ENCODE measurements at regions of chr9 and their contacts with region 1.

Region 1: DNA sequence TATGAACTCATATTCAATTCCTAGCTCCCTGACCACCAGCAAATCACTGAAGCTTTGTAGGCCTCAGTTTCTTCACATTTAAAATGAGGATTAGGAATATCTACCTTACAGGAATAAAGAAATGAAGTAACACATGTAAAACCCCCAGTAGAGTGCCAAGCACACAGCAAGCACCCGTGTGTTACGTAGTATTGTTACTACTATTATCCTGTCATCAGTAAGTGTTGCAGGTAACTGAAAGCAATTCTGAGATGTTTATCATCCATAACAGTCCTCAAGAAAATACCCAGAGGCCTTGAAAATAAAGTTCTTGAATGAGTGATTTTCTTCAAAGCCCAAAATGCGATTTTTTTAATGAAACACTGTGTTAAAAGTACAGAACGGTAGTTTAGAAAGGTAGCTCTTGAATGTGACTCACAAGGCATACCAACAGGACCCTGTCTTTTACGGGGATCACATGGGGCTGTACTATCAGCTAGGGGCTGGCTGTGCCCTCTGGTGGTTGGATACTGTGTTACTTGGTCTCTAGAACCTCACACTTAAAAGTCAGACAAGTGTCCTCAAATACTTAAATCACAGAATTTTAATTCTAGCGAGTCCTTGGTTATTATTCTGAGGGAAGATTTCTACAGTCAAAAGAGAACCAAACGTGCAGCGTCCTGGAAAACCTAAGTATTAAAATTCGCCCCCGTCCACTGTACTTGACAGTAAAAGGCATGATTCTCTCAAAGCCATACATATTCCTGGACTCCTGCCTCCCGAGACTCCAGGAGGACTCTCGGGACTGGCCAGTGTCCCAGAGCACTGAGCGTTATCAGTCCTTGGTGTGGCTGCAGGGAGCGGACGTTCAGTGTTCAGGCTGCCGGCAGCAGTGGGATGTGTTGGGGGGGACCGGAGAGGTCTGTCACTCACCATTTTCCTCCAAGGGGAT is 725 bp downstream of the NDUFB6 start:
- DNase-seq: peak; percentile 65
- H3K4me3 Mint-ChIP-seq: peak overlapping the region; percentile 99
- H3K27ac Mint-ChIP-seq: peak overlapping the region; percentile 98
- H3K4me1 Mint-ChIP-seq: peaks cover 21% of the 10 kb centered on the region
- H3K27me3 Mint-ChIP-seq: peaks cover 11% of the 10 kb centered on the region

Region 2: DNA sequence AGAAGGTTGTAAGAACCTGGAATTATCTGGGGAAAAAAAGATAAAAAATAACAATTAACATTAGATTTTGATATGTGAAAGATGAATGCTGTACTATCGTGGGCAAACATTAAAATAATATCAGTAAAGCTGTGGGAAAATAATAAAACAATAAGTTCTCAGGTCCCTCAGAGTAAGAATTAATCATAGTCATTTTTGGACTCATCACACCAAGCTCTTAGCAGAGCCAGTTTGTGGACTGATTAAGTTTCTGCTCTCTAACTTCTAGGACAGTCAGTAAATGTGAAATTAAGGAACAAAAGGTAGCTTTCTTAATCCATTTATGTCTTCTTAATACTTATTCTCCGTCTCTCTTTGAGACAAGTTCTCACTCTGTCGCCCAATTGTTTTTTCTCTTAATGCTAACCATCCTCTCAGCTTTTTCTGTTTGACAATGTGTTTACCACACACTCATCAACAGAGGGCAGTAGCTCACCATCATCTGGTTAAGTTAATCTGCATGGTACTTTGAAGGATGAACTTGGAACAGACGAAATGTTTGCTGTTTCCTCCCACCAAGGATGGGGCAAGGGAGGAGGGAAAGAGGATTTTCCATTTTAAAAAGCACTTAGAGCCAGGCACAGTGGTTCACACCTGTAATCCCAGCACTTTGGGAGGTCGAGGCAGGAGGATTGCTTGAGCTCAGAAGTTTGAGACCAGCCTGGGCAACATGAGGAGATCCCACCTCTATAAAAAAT is 193.1 kb before region 1 on chr9:
- intact Hi-C with region 1: loop called (anchors 1 kb)
- DNase-seq: peak; percentile 42
- H3K4me3 Mint-ChIP-seq: peak overlapping the region; percentile 16
- H3K27ac Mint-ChIP-seq: no peak overlapping the region
- H3K4me1 Mint-ChIP-seq: peaks cover 7% of the 10 kb centered on the region
- H3K27me3 Mint-ChIP-seq: peaks cover 21% of the 10 kb centered on the region

Region 3: GRCh38 chr9:32384364-32385151 is 187.7 kb before region 1 on chr9 and contains the start of gene ACO1:
- intact Hi-C with region 1: loop called (anchors 1 kb)
- DNase-seq: peak; percentile 84
- H3K4me3 Mint-ChIP-seq: peak within 1 kb of the TSS; percentile 81
- H3K27ac Mint-ChIP-seq: peak within 1 kb of the TSS; percentile 38
- H3K4me1 Mint-ChIP-seq: peaks cover 15% of the 10 kb centered on the region
- H3K27me3 Mint-ChIP-seq: peaks cover 21% of the 10 kb centered on the region
- total RNA-seq, gene ACO1: 5.6 and 6.9 TPM in 2 replicates

Region 4: DNA sequence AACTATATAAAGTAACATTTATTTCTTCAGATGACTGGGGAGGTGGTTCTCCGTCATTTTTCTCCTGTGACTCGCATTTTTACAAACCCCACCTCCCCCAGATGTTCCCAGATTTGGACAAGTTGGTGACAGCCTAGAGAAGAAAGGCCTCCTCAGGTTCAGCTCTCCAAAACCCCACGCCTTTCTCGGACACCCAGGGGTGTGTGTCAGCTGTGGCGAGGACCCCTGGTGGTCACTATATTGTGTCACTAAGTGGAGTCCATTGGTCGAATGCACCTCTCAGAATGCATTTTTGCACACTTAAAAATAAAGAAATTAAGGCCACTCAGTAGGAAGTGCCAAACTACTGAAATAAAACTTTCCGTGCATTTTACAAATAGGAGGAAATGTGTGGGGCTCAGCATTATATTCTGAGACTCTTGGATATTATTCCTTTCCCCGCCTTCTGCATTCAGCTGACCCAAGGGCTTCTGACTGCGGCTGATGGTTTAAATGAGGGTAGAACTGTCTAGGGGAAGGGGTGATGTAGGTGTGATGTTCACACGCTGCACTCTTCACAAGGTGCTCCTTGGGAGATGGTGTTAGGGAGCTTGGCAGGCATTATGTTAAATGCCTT is 140.2 kb before region 1 on chr9:
- intact Hi-C with region 1: loop called (anchors 1 kb)
- DNase-seq: no peak
- H3K4me3 Mint-ChIP-seq: no peak overlapping the region
- H3K27ac Mint-ChIP-seq: no peak overlapping the region
- H3K4me1 Mint-ChIP-seq: peaks cover 6% of the 10 kb centered on the region
- H3K27me3 Mint-ChIP-seq: no peaks in the 10 kb centered on the region

Region 5: DNA sequence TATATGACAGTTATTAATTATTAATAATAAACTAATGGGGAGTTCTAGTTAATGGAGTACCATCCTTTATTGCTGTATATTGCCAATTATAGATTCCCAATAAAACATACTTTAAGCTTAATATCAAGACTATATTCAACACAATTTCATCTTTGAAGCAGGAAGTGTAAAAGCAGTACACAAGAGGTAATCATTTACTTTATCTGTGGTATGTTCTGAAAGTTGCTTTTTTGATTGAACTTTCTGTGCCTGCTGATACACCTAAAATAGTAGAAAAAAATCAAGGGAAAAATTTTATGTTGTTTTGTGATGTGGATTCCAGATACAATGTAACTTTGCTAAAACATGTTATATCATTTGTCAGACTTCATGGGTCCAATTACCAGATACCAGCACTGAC is 129.8 kb before region 1 on chr9:
- intact Hi-C with region 1: no loop called
- DNase-seq: no peak
- H3K4me3 Mint-ChIP-seq: no peak overlapping the region
- H3K27ac Mint-ChIP-seq: no peak overlapping the region
- H3K4me1 Mint-ChIP-seq: peaks cover 4% of the 10 kb centered on the region
- H3K27me3 Mint-ChIP-seq: no peaks in the 10 kb centered on the region

Region 6: DNA sequence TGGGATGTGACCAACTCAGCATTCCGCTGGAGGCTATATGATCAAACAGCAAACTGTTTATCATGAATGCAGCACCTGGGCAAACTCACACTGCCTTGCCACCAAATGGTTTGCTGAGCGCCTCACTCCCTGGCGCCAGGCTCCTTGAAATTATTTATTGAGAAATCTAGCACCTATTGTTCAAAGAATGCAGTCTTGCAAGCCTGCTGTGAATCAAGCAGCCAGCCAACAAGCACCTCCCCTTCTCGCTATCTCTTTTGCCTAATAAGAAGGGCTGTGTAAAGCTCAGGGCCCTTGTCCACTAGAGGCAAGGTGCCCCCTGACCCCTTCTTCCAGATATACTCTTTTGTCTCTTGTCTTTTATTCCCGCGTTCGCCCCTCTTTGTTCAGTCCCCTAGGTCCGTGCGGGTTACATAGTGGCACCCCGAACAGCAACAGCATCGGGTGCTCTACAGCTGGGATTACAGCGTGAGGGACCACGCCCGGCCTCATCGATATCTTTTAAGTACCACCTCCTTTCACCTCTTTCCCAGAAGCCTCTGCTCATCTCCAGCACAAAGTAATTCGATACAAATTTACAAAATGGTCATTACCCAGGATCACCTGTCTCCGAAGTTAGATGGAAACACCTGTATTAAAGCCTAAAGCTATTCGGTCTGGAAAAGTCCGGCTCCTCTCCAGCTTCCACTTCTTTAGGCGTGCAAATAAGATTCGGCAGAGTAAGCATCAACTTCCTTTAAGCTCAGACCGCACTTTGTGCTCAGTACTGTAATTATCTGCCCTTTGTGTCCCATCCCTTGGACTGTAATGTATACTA is 47.1 kb before region 1 on chr9:
- intact Hi-C with region 1: loop called (anchors 1 kb)
- DNase-seq: no peak
- H3K4me3 Mint-ChIP-seq: peak overlapping the region; percentile 92
- H3K27ac Mint-ChIP-seq: peak overlapping the region; percentile 86
- H3K4me1 Mint-ChIP-seq: peaks cover 53% of the 10 kb centered on the region
- H3K27me3 Mint-ChIP-seq: no peaks in the 10 kb centered on the region

Region 7: DNA sequence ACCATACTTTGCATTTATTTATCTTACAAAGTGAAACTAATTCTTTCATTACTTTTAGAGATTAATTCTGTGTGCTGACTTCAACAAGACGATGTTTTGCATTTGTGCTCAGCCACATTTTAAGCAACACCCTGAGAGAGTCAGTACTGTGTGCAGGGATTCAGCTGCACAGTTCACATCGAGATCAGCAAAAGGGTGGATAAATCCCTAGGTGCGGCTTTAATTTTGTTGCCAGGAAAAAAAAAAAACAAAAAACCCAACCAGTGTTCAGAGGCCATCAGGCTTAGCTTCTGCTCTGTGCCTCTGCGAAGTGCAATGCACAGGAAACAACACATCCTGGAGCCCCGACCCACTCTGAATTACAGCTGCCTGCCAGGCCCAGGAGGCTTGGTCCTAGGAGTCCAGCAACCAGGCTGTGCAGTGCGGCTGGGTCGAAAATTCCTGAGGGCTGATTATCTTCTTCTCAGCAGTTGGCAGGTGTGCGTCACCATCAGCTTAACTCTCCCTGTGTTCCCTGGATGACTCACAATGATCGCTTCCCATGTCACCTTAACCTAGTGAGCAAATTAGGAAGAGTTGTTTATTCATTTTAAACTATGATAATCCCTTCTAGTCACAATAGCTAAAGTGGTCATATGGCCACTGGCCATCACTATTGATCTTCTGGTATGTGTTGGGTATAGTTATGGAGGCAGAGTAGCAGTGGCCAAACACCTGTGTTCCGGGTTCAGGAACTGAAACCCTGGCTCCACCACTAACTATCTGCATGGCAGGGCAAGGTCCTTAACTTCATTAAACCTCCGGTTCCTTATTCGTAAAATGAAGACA is 31.9 kb after region 1 on chr9:
- intact Hi-C with region 1: no loop called
- DNase-seq: no peak
- H3K4me3 Mint-ChIP-seq: no peak overlapping the region
- H3K27ac Mint-ChIP-seq: no peak overlapping the region
- H3K4me1 Mint-ChIP-seq: peaks cover 8% of the 10 kb centered on the region
- H3K27me3 Mint-ChIP-seq: peaks cover 12% of the 10 kb centered on the region

Region 8: DNA sequence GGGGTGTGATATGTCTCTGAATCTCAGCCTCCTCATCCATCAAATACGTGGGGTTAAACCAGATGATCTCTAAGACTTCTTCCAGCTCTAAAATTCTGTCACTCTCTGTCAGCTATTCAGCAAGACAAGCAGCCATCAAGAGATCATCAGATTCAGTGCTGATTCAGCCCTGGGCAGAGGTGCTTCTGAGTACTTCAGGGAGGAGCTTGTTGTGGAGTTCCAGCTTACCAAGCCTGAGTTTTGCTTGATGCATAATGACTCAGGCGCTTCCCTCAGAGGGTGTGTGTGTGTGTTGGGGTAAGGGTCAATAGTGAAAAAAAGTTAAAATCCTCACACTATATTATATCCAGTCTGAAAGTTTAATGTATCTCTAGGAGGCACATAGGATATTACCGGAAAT is 92.9 kb after region 1 on chr9:
- intact Hi-C with region 1: no loop called
- DNase-seq: no peak
- H3K4me3 Mint-ChIP-seq: no peak overlapping the region
- H3K27ac Mint-ChIP-seq: no peak overlapping the region
- H3K4me1 Mint-ChIP-seq: no peaks in the 10 kb centered on the region
- H3K27me3 Mint-ChIP-seq: peaks cover 3% of the 10 kb centered on the region

Region 9: DNA sequence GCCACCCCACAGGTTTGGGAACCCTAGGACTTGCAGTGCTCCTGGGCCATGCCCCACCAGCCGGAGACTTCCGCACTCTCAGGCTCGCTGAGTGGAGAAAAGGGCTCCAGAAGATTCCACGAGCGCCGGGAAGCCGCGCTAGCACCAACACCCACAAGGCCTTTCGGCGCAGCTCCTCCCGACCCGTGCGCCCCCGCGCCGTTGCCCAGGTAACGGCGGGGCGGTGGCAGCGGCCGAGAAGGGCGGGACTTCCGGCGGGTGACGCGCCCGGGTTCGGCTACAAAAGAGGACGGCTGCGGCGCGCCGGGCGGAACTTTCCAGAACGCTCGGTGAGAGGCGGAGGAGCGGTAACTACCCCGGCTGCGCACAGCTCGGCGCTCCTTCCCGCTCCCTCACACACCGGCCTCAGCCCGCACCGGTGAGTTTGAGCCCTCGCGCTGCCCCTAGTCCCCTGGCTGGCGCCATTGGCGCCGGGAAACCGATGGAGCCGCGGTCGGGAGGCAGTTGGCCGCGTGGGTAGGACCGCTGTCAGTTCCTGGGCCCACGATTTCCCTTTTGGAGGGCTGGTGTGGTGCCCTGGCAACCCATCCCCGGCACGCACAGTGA is 452.8 kb after region 1 on chr9 and contains the start of gene DNAJA1:
- intact Hi-C with region 1: loop called (anchors 1 kb)
- DNase-seq: peak; percentile 95
- H3K4me3 Mint-ChIP-seq: peak within 1 kb of the TSS; percentile 94
- H3K27ac Mint-ChIP-seq: peak within 1 kb of the TSS; percentile 98
- H3K4me1 Mint-ChIP-seq: peaks cover 68% of the 10 kb centered on the region
- H3K27me3 Mint-ChIP-seq: no peaks in the 10 kb centered on the region
- total RNA-seq, gene DNAJA1: 296 and 312 TPM in 2 replicates

Region 10: DNA sequence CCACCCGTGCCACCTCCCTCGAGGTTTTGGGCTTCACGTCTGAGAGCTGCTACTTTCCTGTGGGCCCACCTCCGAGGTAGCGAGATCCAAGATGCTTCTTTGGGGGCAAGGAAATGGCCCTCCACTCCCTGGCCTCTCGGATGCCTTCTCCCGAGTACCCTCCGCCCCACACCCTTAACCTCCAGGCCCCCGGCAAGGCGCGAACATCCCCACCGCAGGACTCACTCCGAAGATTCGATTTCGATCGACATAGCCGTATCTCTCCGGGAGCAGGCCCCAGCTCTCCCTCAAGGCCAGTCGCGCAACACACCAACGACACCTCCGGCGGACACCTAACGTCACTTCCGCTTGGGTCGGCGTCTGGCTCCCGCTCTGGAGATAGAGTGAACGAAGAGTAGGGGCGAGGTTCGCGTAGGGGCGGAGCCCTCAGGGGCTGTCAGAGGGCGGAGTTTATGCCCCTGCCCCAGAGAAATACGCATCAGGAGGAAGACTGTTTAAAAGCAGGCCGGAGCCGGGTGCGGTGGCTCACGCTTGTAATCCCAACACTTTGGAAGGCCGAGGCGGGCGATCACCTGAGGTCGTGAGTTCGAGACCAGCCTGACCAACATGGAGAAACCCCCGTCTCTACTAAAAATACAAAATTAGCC is 504.2 kb after region 1 on chr9 and contains the start of gene SMU1:
- intact Hi-C with region 1: loop called (anchors 5 kb)
- DNase-seq: peak; percentile 96
- H3K4me3 Mint-ChIP-seq: peak within 1 kb of the TSS; percentile 99
- H3K27ac Mint-ChIP-seq: peak within 1 kb of the TSS; percentile 96
- H3K4me1 Mint-ChIP-seq: peaks cover 37% of the 10 kb centered on the region
- H3K27me3 Mint-ChIP-seq: peaks cover 2% of the 10 kb centered on the region
- total RNA-seq, gene SMU1: 28.8 TPM in 2 replicates

Region 11: GRCh38 chr9:33430942-33431341 is 858.7 kb after region 1 on chr9:
- intact Hi-C with region 1: no loop called
- DNase-seq: no peak
- H3K4me3 Mint-ChIP-seq: no peak overlapping the region
- H3K27ac Mint-ChIP-seq: no peak overlapping the region
- H3K4me1 Mint-ChIP-seq: peaks cover 20% of the 10 kb centered on the region
- H3K27me3 Mint-ChIP-seq: no peaks in the 10 kb centered on the region